Mammary epithelial cell (primary cell): ENCODE measurements at regions of chr12 and their contacts with region 1.

Region 1: DNA sequence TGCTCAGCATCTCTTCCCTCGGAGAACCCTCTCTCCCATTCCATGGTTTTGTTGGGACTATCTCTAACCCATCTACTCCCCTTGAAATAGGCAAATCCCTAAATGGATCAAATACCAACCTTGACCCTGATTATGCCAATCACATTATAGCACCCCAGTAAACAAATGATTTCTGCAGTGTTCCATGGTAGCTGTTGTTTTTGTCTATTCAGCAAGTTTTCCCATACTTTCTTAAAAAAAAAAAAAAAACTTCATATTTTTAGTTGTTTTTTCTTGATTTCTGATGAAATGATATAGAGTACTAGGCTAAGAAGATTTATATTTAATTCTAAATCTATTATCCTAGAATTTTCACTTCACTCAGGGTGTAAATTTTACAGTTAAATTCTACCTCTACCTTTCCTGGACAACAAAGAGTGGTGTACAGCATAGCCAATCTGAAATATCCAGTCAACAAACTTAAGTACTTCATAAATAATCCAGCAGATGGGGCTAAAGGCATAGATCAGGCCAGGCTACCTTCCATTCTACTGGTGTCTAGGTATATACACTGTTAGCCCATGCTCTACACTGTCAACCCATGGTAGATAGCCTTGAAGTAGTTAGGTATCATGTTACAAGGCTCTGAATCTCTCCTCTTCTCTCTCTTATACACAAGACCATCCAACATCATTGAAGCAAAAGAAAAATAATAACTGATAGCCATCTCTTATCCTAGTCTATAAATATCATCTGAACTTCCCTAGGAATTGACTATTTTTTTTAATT is 82.2 kb downstream of the PLEKHG7 start:
- DNase-seq: peak; percentile 78
- H3K4me3 ChIP-seq: no peak overlapping the region
- H3K27ac ChIP-seq: peak overlapping the region; percentile 43
- H3K4me1 ChIP-seq: peaks cover 15% of the 10 kb centered on the region
- H3K27me3 ChIP-seq: no peaks in the 10 kb centered on the region
- CTCF ChIP-seq: peak; percentile 58 to 60

Region 2: DNA sequence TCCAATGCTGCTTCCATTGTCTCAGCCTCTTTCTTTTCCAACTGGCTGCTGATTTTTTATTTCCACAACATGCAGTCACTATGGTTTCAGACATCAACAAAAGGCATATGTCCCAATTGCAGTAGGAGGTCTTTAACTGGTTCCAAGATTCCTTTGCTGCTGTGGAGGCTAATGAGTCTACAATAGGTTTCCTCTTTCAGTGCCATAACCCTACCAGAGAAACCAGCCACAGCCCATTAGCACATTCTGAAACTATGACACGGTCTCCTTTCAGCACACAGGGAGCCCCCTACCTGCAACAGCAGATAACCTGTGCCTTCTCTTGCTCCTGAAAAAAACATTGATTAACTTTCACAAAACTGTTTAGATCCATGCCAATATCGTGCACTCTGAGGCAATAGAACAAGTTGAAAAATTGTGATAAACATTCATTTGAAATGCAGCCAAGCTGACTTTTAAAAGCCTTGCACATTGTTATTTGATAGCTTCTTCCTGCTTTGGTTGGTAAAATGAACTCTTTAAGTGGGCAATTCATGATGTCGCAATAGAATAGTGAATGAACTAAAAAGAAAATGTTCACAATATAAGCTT is 49.8 kb before region 1 on chr12:
- CTCF ChIA-PET with region 1: no interaction called
- dilution Hi-C with region 1: no loop called
- in situ Hi-C with region 1: no loop called
- intact Hi-C with region 1: no loop called
- DNase-seq: peak; percentile 65
- H3K4me3 ChIP-seq: no peak overlapping the region
- H3K27ac ChIP-seq: no peak overlapping the region
- H3K4me1 ChIP-seq: peaks cover 3% of the 10 kb centered on the region
- H3K27me3 ChIP-seq: no peaks in the 10 kb centered on the region
- CTCF ChIP-seq: no peak

Region 3: DNA sequence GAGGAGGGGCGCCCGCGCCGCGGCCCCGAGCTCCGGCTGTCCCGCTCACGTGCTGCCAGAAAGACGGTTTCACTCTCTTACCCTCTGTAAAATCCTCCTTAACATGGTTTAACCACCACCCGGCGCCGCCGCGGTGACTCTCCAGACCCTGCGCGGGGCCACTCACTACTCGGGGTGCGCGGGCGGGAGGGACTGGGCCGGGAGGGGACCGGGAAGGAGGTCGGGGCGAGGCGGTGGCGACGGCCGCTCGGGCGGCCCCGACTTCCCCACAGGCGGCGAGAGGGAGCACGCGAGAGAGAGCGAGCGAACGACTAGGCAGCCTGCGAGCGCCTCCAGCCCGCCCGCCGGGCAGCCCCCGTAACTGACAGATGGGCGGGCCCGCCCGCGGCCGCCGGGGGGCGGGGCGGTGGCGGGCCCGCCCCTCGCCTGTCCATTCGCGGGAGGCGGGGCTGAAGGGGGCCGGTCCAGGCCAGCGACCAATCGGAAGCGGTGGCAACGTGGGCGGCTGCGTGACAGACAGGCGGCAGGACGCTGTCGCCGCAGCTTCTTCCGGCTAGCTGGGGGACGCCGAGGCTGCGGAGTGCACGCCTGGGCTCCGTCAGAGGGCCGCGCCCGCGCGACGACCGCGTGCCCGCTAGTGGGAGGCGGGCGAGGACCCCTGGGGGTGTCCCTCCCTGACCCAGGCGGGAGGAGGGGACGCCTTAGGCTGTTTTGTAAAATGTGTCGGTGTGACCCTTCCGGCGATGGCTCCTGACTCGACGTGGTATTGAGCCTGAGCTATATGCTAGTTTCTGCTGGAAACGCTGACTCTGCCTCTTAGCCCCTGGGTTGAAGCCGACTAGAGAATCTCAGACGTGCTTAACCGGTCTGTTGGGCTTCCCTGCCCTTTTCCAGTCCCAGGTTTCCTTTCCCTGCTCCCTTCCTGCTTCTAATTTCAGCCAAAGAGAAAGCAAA is 144.3 kb after region 1 on chr12 and contains the start of gene EEA1:
- CTCF ChIA-PET with region 1: no interaction called
- dilution Hi-C with region 1: no loop called
- in situ Hi-C with region 1: no loop called
- intact Hi-C with region 1: loop called (anchors 5 kb)
- DNase-seq: peak; percentile 96
- H3K4me3 ChIP-seq: peak within 1 kb of the TSS; percentile 66 to 75 (median 70)
- H3K27ac ChIP-seq: peak within 1 kb of the TSS; percentile 97
- H3K4me1 ChIP-seq: peaks cover 17% of the 10 kb centered on the region
- H3K27me3 ChIP-seq: no peaks in the 10 kb centered on the region
- CTCF ChIP-seq: no peak
- total RNA-seq, gene EEA1: 17.2 to 45.2 TPM

Region 4: DNA sequence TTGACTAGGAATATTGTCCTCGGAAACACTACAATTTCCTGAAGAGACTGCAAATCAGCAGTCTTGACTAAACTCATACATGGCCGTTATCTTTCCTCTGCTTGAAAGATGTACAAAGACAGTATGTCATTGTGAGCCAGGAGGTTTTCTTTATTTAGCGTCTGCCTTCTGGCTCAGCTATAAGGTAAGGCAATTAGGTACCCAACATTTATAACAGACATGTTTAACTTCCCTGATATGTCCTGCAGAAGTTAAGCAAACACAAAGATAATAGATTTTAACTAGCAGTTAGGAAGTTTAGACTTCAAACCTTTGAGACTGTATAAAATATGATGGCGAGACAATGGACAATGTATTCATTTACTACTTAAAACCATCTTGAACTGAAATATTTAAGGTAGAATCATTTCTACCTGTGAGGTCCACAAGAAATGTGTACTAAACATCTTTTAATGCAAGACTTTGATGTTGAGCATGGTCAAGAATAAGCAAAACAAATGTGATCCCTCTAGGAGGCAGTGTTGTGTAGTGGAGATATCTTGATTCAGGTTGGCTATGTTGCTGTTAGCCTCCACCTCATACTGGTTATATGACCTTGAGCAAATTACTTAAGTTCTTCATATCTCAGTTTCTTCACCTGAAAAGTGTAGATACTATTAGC is 240.3 kb after region 1 on chr12:
- CTCF ChIA-PET with region 1: no interaction called
- dilution Hi-C with region 1: no loop called
- in situ Hi-C with region 1: no loop called
- intact Hi-C with region 1: loop called (anchors 2 kb)
- DNase-seq: peak; percentile 58
- H3K4me3 ChIP-seq: no peak overlapping the region
- H3K27ac ChIP-seq: no peak overlapping the region
- H3K4me1 ChIP-seq: no peaks in the 10 kb centered on the region
- H3K27me3 ChIP-seq: no peaks in the 10 kb centered on the region
- CTCF ChIP-seq: peak; percentile 60 to 79

Region 5: GRCh38 chr12:93397412-93397811 is 612.4 kb after region 1 on chr12:
- CTCF ChIA-PET with region 1: no interaction called
- dilution Hi-C with region 1: no loop called
- in situ Hi-C with region 1: loop called in 1 of 2 experiments (anchors 25 kb)
- intact Hi-C with region 1: loop called (anchors 5 kb)
- DNase-seq: no peak
- H3K4me3 ChIP-seq: no peak overlapping the region
- H3K27ac ChIP-seq: no peak overlapping the region
- H3K4me1 ChIP-seq: no peaks in the 10 kb centered on the region
- H3K27me3 ChIP-seq: no peaks in the 10 kb centered on the region
- CTCF ChIP-seq: no peak